Activated CD4-positive, alpha-beta memory T cell treated with anti-CD3 and anti-CD28 coated beads for 36 hours (primary cell): ENCODE measurements at regions of chr4 and their contacts with region 1.

Region 1: DNA sequence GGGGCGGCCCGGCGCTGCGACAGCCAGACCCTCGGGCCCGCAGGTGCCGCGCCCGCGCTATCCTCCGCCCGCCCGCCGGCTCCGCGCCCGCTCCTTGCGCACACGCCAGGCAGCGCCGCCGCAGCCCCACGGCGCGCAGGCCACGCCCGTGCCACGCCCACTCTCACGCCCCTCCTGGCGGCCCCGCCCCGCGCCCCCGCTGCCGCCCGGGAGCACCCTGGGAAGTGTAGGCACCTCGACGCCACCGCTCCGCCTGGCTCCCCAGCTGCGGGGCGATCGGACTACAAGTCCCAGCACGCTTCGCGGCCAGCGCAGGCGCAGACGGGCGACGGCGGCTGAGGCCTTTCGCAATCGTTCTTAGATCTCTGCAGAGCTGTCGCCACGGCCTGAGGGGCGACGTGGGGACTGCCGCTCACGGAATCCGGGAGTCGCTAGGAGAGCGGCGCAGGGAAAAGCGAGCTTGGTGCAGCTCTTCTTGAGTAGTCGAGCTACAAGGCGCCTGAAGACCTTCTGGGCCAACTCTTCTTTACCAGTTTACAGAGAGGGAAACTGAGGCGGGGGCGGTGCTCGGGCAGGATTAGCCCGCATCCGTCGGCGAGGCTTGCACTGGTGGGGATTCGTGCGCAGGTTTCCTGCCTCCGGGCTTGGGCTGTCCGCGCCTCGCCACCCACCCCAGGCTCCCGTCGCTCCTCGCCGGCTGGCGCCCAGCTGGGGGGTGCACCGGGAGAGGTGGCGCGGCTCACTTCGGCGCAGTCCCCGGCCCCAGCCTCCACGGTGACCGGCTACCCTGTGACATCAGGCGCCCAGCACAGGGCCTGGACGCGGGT is at the start of gene ABLIM2:
- DNase-seq: peak; percentile 99
- H3K4me3 Mint-ChIP-seq: peak within 1 kb of the TSS; percentile 99
- H3K27ac Mint-ChIP-seq: peak within 1 kb of the TSS; percentile 57
- H3K4me1 Mint-ChIP-seq: peaks cover 16% of the 10 kb centered on the region
- H3K27me3 Mint-ChIP-seq: peaks cover 5% of the 10 kb centered on the region
- total RNA-seq, gene ABLIM2: 0.55 to 0.63 TPM

Region 2: DNA sequence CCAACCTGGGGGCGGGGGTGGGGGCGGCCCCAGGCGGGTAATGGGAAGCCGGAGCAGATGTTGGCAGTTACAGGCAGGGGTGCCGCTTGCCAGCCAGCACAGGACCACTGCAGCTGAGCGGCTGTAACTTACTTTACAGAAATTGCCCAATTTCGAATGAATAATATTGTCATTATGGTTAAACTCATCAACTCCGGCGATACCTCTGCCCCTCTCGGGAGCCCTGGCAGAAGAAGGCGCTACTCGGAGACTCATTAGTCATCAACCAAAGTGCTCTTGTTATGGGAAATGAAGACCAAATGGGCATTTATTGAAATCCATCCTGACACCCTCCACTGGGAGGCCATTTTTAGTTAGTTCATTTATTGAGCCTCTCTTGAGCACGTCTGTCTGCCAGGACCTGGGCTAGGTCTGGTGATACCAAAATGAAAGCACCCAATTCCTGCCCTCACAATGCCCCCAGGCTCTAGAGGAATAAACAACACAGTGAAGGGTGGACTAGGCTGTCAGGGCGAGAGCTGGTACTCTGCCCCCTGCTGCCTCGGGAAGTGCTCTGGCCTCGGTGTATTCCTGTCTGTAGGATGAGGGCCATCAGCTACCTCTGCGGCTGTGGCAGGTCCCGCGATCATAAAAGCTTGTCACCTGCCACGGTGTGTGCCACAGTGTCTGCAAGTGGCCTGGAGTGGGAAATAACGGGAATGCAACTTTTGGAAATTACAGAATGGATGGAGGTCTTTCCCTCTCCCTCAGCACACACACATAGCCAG is 565.1 kb before region 1 on chr4:
- CTCF ChIA-PET with region 1: no interaction called
- POLR2A ChIA-PET with region 1: no interaction called
- intact Hi-C with region 1: no loop called
- DNase-seq: no peak
- H3K4me3 Mint-ChIP-seq: no peak overlapping the region
- H3K27ac Mint-ChIP-seq: no peak overlapping the region
- H3K4me1 Mint-ChIP-seq: no peaks in the 10 kb centered on the region
- H3K27me3 Mint-ChIP-seq: peaks cover 10% of the 10 kb centered on the region

Region 3: DNA sequence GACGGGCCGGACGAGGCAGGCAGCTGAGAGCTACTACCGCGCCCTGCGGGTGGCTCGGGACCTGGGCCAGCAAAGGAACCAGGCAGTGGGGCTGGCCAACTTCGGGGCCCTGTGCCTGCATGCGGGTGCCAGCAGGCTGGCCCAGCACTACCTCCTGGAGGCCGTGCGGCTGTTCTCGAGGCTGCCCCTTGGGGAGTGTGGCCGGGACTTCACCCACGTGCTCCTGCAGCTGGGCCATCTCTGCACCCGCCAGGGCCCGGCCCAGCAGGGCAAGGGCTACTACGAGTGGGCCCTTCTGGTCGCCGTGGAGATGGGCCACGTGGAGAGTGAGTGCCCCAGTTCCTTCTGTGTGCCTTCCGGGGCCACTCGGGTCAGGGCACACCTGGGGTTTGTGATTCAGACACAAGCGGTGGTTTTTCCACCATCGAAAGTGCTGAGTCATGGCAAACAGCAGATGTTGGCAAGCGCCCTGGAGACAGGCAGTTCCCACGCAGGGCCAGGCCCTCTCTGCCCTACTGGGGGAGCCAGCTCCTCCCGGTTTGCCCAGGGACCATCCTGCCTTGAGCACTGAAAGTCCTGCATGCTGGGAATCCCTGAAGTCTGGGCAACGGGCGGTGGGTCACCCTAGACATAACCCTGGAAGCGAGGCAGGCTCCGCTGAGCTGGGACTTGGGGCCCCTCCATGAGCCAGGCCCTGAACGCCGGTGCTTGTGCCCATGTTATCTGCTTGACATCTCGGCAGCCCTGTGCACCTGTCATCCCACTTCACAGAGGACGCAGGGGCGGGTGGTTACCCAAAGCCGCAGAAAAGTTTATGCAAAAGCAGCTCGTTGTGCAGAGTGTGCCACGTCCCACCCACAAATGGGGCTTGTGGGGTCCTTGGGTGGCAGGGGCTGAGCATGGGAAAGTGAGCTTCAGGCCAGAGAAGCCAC is 69.7 kb after region 1 on chr4:
- CTCF ChIA-PET with region 1: no interaction called
- POLR2A ChIA-PET with region 1: interaction called, 3 read pairs
- intact Hi-C with region 1: loop called (anchors 2 kb)
- DNase-seq: peak; percentile 94
- H3K4me3 Mint-ChIP-seq: no peak overlapping the region
- H3K27ac Mint-ChIP-seq: peak overlapping the region; percentile 66
- H3K4me1 Mint-ChIP-seq: peaks cover 25% of the 10 kb centered on the region
- H3K27me3 Mint-ChIP-seq: no peaks in the 10 kb centered on the region

Region 4: DNA sequence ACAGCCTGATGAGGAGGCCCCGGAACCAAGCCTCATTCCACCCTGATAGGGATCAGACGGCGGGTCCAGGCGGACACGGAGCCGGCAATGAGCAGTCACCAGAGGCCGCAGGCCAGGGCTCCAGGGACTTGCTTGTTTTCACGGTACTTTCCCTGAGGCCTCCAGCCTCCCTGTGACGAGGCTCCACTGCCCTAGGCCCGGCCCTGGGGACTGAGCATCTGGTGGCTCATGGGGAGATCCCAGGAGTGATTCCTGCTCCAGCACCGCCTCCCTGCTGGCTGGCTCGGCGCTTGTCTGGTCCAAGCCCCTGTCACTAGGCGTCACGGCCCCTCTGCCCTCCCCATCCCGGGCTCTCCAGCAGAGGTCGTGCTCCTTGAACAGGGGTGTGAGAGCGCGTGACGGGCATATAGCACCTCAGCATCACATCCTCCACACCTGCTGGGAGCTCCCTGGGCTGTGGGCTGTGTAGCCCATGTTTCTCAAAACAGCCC is 124.8 kb after region 1 on chr4:
- CTCF ChIA-PET with region 1: no interaction called
- POLR2A ChIA-PET with region 1: no interaction called
- intact Hi-C with region 1: no loop called
- DNase-seq: no peak
- H3K4me3 Mint-ChIP-seq: no peak overlapping the region
- H3K27ac Mint-ChIP-seq: no peak overlapping the region
- H3K4me1 Mint-ChIP-seq: no peaks in the 10 kb centered on the region
- H3K27me3 Mint-ChIP-seq: no peaks in the 10 kb centered on the region

Region 5: GRCh38 chr4:8440492-8441341 is 281.8 kb after region 1 on chr4 and contains the starts of genes ACOX3 and TRMT44:
- CTCF ChIA-PET with region 1: no interaction called
- POLR2A ChIA-PET with region 1: no interaction called
- intact Hi-C with region 1: loop called (anchors 1 kb)
- DNase-seq: peak; percentile 97
- H3K4me3 Mint-ChIP-seq: peak within 1 kb of the TSS; percentile 95
- H3K27ac Mint-ChIP-seq: peak within 1 kb of the TSS; percentile 99
- H3K4me1 Mint-ChIP-seq: peaks cover 73% of the 10 kb centered on the region
- H3K27me3 Mint-ChIP-seq: no peaks in the 10 kb centered on the region
- total RNA-seq, gene ACOX3: 42.3 to 45.8 TPM
- total RNA-seq, gene TRMT44: 24.1 to 29.2 TPM